ENCODE measurements at regions of chr18 and their contacts with region 1.

Region 1: DNA sequence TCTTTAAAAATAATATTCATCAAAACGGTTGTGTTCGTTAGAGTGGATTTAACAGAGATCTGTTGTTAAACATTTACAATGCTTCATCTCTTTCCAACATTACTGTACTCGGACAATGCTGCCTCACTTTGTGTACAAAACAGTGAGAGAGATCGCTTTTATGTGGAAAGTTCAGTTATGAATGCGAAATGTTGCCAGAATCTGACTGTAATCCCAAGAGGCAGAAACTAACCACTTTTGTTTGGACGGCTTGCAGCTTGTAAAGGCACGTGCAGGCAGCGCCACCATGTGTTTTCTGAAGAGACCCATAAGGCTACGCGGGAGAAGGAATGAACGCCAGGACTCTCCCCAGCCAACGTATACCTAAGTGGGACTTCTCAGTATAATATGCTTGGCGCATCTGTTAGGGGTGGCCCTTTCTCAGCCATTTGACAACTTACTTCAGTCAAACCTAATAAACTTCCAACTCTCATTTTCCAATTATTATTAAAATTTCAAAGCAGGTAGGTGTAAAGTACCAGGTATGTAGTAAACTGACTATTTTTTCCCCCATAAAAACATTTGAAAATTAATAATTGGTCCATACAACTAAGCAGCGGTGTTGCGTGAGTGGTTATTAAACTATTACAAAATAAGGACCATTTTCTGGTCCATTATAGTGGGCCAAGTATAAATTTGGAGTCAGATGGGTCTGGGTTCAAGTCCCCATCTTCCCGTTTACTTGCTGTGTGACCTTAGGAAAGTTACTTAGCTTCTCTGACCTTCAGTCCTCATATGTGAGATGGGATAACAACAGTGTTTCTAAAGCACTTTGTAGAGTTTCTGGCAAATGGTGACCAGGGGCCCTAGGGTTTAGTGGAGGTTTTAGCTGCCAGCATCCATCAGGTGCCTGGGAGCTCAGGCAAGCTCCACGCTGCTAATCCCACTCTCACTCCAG is 5.6 kb upstream of the NAPG start:
- DNase-seq: peak; percentile 82 to 93 (median 87)
- H3K4me3 ChIP-seq: no peak overlapping the region
- H3K27ac ChIP-seq: no peak overlapping the region
- H3K4me1 ChIP-seq: peaks cover 4% of the 10 kb centered on the region
- H3K27me3 ChIP-seq: no peaks in the 10 kb centered on the region
- CTCF ChIP-seq: peak; percentile 76 to 94 (median 77)
- EP300 ChIP-seq: no peak
- POLR2A ChIP-seq: no peak

Region 2: DNA sequence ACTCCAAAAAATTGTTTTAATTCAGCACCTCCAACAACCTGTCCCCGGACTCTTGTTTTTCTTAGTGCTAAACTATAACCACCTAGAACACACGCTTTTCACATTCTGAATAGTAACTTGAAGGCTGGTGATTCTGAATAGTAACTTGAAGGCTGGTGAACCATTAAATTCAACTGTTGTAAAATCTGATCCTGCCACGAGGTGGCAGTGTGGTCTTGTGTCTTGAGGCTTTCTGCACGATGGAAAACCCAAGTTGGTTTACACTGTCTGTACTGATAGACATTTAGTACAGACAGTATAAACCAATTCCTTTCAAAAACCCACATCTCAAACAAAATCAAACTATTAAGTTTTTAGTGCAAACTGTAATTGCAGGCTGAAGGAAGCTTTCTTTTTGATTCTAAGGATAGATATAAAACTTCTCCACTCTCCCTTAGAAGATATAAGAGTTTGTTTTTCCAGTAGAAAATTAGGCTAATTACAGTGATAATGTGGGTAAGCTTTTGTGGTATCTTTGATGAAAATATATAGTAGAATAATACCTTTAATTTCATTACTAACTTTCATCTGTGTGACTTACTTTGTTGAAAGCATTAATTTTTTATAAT is 548.9 kb before region 1 on chr18:
- intact Hi-C with region 1: loop called (anchors 2 to 10 kb)
- DNase-seq: peak; percentile 69 to 87 (median 75)
- H3K4me3 ChIP-seq: no peak overlapping the region
- H3K27ac ChIP-seq: no peak overlapping the region
- H3K4me1 ChIP-seq: no peaks in the 10 kb centered on the region
- H3K27me3 ChIP-seq: no peaks in the 10 kb centered on the region
- CTCF ChIP-seq: peak; percentile 70 to 85 (median 85)
- EP300 ChIP-seq: no peak
- POLR2A ChIP-seq: no peak

Region 3: DNA sequence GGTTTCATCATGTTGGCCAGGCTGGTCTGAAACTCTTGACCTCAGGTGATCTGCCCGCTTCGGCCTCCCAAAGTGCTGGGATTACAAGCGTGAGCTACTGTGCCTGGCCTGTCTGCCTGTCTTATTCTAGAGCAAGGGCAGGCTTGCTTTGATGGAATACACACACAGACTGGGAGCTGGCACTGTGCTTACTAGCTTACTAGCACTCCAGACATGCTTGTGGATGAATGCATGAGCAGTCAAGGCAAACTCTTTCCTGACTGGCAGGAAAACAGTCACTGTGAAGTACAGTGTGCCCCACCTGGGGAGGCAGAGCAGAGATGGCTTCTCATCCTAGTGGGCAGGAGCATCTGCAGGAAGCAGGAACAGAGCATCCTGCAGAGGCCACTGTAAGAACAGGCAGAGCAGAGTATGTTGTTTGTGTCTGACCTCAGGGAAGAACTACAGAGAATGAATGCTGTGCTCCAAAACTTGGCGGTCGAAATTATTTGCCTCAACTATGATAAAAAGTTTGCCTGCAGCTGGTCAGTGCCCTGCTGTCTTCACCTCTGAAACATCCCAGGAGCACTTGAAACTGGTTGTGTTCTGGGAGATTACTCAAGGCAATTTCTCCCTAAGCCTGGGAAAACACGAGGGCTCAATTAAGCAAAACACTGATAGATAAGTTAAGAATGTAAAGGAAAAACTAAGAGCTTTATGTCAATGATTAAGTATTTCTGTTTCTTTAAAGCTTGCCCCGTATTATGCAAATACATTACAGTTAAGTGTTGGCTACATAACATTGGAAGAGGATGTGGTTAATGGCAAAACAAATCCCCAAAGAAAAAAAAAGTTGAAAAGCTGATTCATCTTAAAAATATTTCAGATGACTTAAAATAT is 504.1 kb before region 1 on chr18:
- intact Hi-C with region 1: loop called in 2 of 4 experiments (anchors 5 kb)
- DNase-seq: peak in 3 of 5 donors; percentile 50 to 64 (median 55)
- H3K4me3 ChIP-seq: no peak overlapping the region
- H3K27ac ChIP-seq: peak overlapping the region in 1 of 2 donors; percentile 51
- H3K4me1 ChIP-seq: peaks cover 6% of the 10 kb centered on the region
- H3K27me3 ChIP-seq: no peaks in the 10 kb centered on the region
- CTCF ChIP-seq: peak in 2 of 3 donors; percentile 17 to 48
- EP300 ChIP-seq: no peak
- POLR2A ChIP-seq: no peak

Region 4: DNA sequence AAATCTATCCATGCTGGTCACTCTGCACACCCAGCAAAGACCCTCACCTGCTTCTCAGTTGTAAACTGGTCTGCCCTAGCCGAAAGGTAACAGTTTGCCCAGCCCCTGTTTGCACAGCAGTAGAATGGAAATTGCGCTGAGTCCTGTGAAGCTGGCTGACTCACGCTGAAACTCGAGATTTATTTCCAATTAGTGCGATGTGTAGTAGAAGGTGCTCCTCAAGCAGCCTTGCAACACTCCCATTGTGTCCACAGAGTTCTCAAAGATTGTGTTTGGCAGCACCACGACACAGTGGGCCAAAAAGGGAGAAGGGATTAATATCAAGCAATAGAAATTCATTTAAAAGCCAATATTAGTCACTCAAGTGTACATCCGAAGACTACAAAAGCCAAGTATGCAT is 87.5 kb before region 1 on chr18:
- intact Hi-C with region 1: loop called in 1 of 4 experiments (anchors 5 kb)
- DNase-seq: no peak
- H3K4me3 ChIP-seq: no peak overlapping the region
- H3K27ac ChIP-seq: no peak overlapping the region
- H3K4me1 ChIP-seq: peaks cover 1% of the 10 kb centered on the region
- H3K27me3 ChIP-seq: no peaks in the 10 kb centered on the region
- CTCF ChIP-seq: no peak
- EP300 ChIP-seq: no peak
- POLR2A ChIP-seq: no peak

Measured in ovary (tissue), 10 donors.